HepG2 (cell line): ENCODE measurements at regions of chr6 and their contacts with region 1.

Region 1: GRCh38 chr6:10434692-10435376 is 20.0 kb upstream of the TFAP2A start:
- DNase-seq: peak; percentile 39
- ATAC-seq: no peak
- H3K4me3 ChIP-seq: no peak overlapping the region
- H3K27ac ChIP-seq: no peak overlapping the region
- H3K4me1 ChIP-seq: peaks cover 5% of the 10 kb centered on the region
- H3K27me3 ChIP-seq: no peaks in the 10 kb centered on the region; a peak in 1 of 5 replicates
- CTCF ChIP-seq: peak; percentile 72
- EP300 ChIP-seq: no peak
- POLR2A ChIP-seq: no peak
- RAD21 ChIP-seq: 0 out of 2 replicates have a peak, but pooled peaks have one; percentile 32

Region 2: DNA sequence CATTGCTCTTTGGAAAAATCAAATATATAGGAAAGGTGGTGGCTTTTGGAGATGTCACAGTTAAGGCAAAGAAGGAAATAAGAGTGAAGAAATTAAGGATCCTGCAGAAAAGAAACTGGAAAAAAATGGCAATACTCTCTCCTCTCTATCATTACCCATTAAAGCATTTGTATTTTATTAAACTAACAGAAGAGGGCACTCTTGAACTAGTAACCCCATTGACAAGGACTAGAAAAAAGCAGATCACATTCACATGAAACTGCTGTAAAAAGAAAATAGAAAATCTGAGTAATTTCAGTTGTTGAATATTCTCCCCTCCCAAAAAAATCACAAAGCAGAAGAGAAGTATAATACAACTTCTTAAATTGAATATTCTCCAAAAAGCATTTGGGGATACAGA is 1895.4 kb before region 1 on chr6:
- CTCF ChIA-PET with region 1: interaction called, 3 read pairs
- POLR2A ChIA-PET with region 1: no interaction called
- in situ Hi-C with region 1: loop called (anchors 25 kb)
- intact Hi-C with region 1: loop called (anchors 2 kb)
- DNase-seq: peak; percentile 28
- ATAC-seq: peak; percentile 75
- H3K4me3 ChIP-seq: no peak overlapping the region
- H3K27ac ChIP-seq: no peak overlapping the region
- H3K4me1 ChIP-seq: no peaks in the 10 kb centered on the region
- H3K27me3 ChIP-seq: no peaks in the 10 kb centered on the region
- CTCF ChIP-seq: peak; percentile 54
- EP300 ChIP-seq: no peak
- POLR2A ChIP-seq: no peak
- RAD21 ChIP-seq: peak; percentile 66

Region 3: GRCh38 chr6:8707956-8708772 is 1726.7 kb before region 1 on chr6:
- CTCF ChIA-PET with region 1: interaction called, 3 read pairs
- POLR2A ChIA-PET with region 1: no interaction called
- in situ Hi-C with region 1: loop called (anchors 10 kb)
- intact Hi-C with region 1: loop called (anchors 5 kb)
- DNase-seq: peak; percentile 27
- ATAC-seq: peak; percentile 71
- H3K4me3 ChIP-seq: no peak overlapping the region
- H3K27ac ChIP-seq: no peak overlapping the region
- H3K4me1 ChIP-seq: no peaks in the 10 kb centered on the region
- H3K27me3 ChIP-seq: no peaks in the 10 kb centered on the region; a peak in 1 of 5 replicates
- CTCF ChIP-seq: peak; percentile 46
- EP300 ChIP-seq: no peak
- POLR2A ChIP-seq: no peak
- RAD21 ChIP-seq: no peak

Region 4: DNA sequence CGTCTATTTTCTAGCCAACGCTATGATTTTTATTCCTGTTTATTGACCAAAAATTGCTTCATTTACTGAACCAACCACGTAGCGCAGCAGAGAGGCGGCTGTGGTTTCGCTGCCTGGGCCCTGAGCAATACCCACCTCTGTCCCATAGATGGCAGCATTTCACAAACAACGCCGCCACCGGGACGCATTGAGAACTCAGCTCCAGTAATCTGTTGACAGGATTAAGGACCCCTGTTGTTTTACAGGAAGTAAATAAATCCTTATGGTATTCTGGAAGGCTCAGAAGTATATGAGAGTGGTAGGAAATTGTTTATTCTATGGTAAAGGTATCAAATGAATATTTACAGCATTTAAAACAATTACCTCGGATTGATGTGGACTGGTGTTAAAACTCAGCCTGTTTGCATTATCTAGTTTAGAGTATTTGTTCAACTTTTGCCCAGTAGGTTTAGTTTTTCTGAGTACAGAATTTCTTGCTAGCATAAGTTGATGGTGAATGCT is 1451.6 kb before region 1 on chr6:
- CTCF ChIA-PET with region 1: interaction called, 10 read pairs
- POLR2A ChIA-PET with region 1: interaction called, 3 read pairs
- in situ Hi-C with region 1: loop called (anchors 10 kb)
- intact Hi-C with region 1: loop called (anchors 1 kb)
- DNase-seq: peak; percentile 45
- ATAC-seq: peak; percentile 99
- H3K4me3 ChIP-seq: no peak overlapping the region
- H3K27ac ChIP-seq: no peak overlapping the region
- H3K4me1 ChIP-seq: no peaks in the 10 kb centered on the region
- H3K27me3 ChIP-seq: no peaks in the 10 kb centered on the region
- CTCF ChIP-seq: peak; percentile 93
- EP300 ChIP-seq: no peak
- POLR2A ChIP-seq: no peak
- RAD21 ChIP-seq: peak; percentile 75

Region 5: GRCh38 chr6:9250852-9251251 is 1184.0 kb before region 1 on chr6:
- CTCF ChIA-PET with region 1: interaction called, 14 read pairs
- POLR2A ChIA-PET with region 1: no interaction called
- in situ Hi-C with region 1: no loop called
- intact Hi-C with region 1: loop called (anchors 1 kb)
- DNase-seq: peak; percentile 16
- ATAC-seq: peak; percentile 82
- H3K4me3 ChIP-seq: no peak overlapping the region
- H3K27ac ChIP-seq: no peak overlapping the region
- H3K4me1 ChIP-seq: no peaks in the 10 kb centered on the region
- H3K27me3 ChIP-seq: no peaks in the 10 kb centered on the region; a peak in 1 of 5 replicates
- CTCF ChIP-seq: peak; percentile 82
- EP300 ChIP-seq: no peak
- POLR2A ChIP-seq: no peak
- RAD21 ChIP-seq: no peak

Region 6: DNA sequence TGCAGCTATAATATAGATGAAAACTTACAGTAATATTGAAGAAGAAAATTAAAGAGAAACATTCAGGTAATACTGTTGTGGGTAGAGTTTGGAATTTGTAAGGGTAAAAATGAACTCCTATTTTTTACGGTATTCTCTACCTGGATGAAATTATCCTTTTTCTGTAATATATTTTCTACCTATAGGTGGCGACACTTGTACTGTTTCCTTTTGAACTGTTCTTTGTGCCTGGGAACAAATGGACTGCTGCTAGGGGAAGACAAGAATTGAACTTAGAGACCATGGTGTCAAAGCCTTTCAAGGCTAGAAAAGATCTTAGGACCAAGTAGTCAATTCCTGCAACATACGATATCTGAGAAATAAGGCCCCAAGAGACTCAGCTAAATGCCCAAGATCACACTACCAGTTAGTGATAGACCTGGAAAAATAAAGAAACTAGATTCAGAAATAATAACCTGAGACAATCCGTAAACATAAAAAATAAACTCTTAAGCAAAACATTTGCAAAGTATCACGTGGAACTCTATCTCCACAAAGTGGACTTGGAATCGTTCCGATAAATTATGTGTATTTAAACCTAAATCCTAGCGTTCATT is 403.8 kb before region 1 on chr6:
- CTCF ChIA-PET with region 1: no interaction called
- POLR2A ChIA-PET with region 1: no interaction called
- in situ Hi-C with region 1: loop called (anchors 25 kb)
- intact Hi-C with region 1: loop called (anchors 1 kb)
- DNase-seq: peak; percentile 32
- ATAC-seq: peak; percentile 58; the same call in 1 of the 3 replicates
- H3K4me3 ChIP-seq: no peak overlapping the region
- H3K27ac ChIP-seq: no peak overlapping the region
- H3K4me1 ChIP-seq: peaks cover 12% of the 10 kb centered on the region
- H3K27me3 ChIP-seq: no peaks in the 10 kb centered on the region
- CTCF ChIP-seq: peak; percentile 49
- EP300 ChIP-seq: no peak
- POLR2A ChIP-seq: no peak
- RAD21 ChIP-seq: no peak